PC-3 (cell line): ENCODE measurements at regions of chr6 and their contacts with region 1.

Region 1: GRCh38 chr6:125201961-125202591 is 48.5 kb downstream of the TPD52L1 start:
- DNase-seq: peak; percentile 88
- ATAC-seq: peak; percentile 71
- H3K4me3 ChIP-seq: peak overlapping the region; percentile 56
- H3K27ac ChIP-seq: peak overlapping the region; percentile 83
- H3K4me1 ChIP-seq: peaks cover 48% of the 10 kb centered on the region
- H3K27me3 ChIP-seq: no peaks in the 10 kb centered on the region
- CTCF ChIP-seq: no peak

Region 2: DNA sequence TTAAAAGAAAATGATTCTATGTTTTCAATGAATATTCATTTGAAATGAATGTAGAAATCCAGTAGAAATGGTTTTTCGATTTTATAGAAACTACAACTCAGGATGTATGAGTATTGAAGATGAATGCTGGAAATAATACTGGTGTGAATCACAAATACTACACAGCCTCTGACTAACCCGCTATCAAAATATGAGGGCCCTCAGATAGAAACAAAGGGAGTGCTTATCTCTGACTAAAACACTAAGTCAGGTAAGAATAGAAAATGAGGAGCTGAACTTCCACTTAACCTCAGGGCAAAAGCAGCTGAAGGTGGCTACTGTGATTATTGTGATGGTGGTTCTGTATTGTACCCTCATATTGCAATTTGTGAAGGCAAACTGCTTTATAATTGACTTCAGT is 460.7 kb before region 1 on chr6:
- CTCF ChIA-PET with region 1: no interaction called
- POLR2A ChIA-PET with region 1: no interaction called
- intact Hi-C with region 1: no loop called
- DNase-seq: no peak
- ATAC-seq: no peak
- H3K4me3 ChIP-seq: no peak overlapping the region
- H3K27ac ChIP-seq: no peak overlapping the region
- H3K4me1 ChIP-seq: no peaks in the 10 kb centered on the region
- H3K27me3 ChIP-seq: peaks cover 12% of the 10 kb centered on the region
- CTCF ChIP-seq: no peak

Region 3: DNA sequence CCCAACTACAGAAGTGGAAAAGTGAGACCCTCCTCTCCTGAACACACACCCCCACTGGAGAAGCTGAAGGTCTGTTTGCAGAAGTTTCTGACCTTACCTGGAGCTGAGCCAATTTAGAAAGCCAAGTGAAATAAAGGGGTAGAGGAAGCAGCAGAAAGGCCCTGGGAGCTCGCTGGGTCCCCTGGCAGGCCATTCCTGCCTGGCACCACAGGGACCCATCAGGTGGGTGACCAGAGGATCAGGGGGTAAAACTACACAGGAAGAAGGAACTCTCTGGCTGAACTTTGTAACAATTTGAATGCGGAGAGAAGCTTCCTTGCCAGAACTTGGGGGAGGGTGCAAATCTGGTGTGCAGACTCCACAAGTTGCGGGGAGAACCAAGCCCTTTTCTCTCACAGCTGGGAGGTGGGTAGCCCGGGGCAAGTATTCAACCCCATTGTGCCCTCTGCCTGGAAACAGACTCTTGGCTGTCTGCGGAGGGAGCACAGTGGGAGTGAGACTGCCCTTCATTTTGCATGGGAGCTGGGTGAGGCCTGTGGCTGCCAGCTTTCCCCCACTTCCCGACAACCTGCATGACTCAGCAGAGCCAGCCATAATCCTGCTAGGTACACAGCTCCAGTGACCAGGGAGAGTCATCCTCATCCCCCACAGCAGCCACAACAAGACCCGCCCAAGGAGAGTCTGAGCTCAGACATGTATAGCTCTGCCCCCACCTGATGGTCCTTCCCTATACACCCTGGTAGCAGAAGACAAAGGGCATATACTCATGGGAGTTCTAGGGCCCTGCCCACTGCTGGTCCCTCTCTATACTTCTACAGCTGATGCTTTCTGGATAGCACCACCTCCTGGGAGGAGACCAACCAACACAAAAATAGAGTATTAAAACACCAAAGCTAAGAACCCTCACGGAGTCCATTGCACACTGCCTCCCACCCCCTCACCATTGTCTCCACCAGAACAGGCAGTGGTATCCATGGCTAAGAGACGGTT is 78.0 kb before region 1 on chr6:
- CTCF ChIA-PET with region 1: no interaction called
- POLR2A ChIA-PET with region 1: no interaction called
- intact Hi-C with region 1: no loop called
- DNase-seq: peak; percentile 72
- ATAC-seq: peak; percentile 93
- H3K4me3 ChIP-seq: no peak overlapping the region
- H3K27ac ChIP-seq: peak overlapping the region; percentile 55
- H3K4me1 ChIP-seq: peaks cover 15% of the 10 kb centered on the region
- H3K27me3 ChIP-seq: no peaks in the 10 kb centered on the region
- CTCF ChIP-seq: no peak; the same call in 1 of the 2 replicates

Region 4: GRCh38 chr6:125220712-125221111 is 18.6 kb after region 1 on chr6:
- CTCF ChIA-PET with region 1: no interaction called
- POLR2A ChIA-PET with region 1: no interaction called
- intact Hi-C with region 1: no loop called
- DNase-seq: no peak
- ATAC-seq: no peak
- H3K4me3 ChIP-seq: no peak overlapping the region
- H3K27ac ChIP-seq: no peak overlapping the region
- H3K4me1 ChIP-seq: no peaks in the 10 kb centered on the region
- H3K27me3 ChIP-seq: no peaks in the 10 kb centered on the region
- CTCF ChIP-seq: no peak

Region 5: GRCh38 chr6:125258651-125259349 is 56.7 kb after region 1 on chr6:
- CTCF ChIA-PET with region 1: no interaction called
- POLR2A ChIA-PET with region 1: no interaction called
- intact Hi-C with region 1: loop called (anchors 5 kb)
- DNase-seq: peak; percentile 15
- ATAC-seq: peak; percentile 53
- H3K4me3 ChIP-seq: peak overlapping the region; percentile 16; the same call in 1 of the 2 replicates
- H3K27ac ChIP-seq: peak overlapping the region; percentile 79
- H3K4me1 ChIP-seq: peaks cover 26% of the 10 kb centered on the region
- H3K27me3 ChIP-seq: no peaks in the 10 kb centered on the region
- CTCF ChIP-seq: no peak

Region 6: GRCh38 chr6:125301435-125302391 is 99.6 kb after region 1 on chr6 and contains the start of gene HDDC2:
- CTCF ChIA-PET with region 1: interaction called, 3 read pairs
- POLR2A ChIA-PET with region 1: no interaction called
- intact Hi-C with region 1: loop called (anchors 5 kb)
- DNase-seq: peak; percentile 55
- ATAC-seq: peak; percentile 87
- H3K4me3 ChIP-seq: peak within 1 kb of the TSS; percentile 70
- H3K27ac ChIP-seq: peak within 1 kb of the TSS; percentile 43
- H3K4me1 ChIP-seq: peaks cover 8% of the 10 kb centered on the region
- H3K27me3 ChIP-seq: no peaks in the 10 kb centered on the region
- CTCF ChIP-seq: no peak
- total RNA-seq, gene HDDC2: 88.6 and 96.8 TPM in 2 replicates